HCT116 (cell line): ENCODE measurements at regions of chr2 and their contacts with region 1.

Region 1: DNA sequence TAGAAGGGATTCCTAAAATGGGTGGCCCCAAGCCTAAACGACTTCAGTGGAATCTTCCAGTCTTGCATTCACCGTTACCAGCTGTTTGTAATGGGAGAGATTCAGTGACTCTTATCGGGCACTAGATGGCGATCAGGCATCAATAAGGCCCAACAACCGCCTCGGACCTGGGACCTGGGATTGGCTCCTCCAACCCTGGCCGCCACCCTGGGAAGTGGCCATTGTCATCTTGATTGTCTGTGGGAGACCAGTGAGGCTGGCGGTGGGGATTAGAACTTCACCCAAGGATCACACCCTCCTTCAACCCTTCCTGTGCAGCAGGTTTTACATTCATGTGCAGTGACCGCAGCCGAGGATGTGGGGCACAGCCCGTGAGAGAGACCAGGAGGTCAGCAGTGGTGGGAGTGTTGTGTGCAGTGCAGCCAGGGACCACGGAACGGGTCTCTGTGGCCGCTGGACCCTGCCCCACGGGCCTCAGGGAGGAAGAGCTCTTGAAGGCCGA is 85.3 kb downstream of the SPP2 start:
- DNase-seq: peak; percentile 73
- ATAC-seq: peak; percentile 97
- H3K4me3 ChIP-seq: no peak overlapping the region
- H3K27ac ChIP-seq: peak overlapping the region; percentile 15; the same call in 1 of the 2 replicates
- H3K4me1 ChIP-seq: peaks cover 8 to 33% of the 10 kb centered on the region in 2 experiments; a peak in 3 of 4 replicates
- H3K27me3 ChIP-seq: no peaks in the 10 kb centered on the region
- CTCF ChIP-seq: peak; percentile 82 to 91 (median 89)
- POLR2A ChIP-seq: no peak
- RAD21 ChIP-seq: peak; percentile 99

Region 2: DNA sequence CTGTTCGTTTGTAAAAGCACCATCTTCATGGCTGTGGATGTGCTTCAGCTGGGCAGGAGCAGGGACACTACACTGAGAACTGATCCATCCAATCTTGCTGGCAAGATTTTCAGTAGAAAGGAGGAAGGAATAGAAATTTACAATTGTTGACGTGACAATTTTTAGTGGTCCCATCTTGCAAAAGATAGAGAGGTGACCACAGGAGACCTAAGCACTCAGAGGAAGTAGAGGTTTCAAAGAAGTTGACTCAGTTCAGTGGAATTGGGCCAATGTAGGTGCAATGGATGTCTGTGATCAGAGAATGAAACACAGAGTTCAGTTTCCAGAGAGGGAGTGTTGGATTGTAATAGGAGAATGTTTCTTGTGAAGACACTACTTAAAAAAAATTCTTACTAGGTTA is 421.6 kb before region 1 on chr2:
- CTCF ChIA-PET with region 1: no interaction called
- POLR2A ChIA-PET with region 1: no interaction called
- RAD21 ChIA-PET with region 1: no interaction called
- intact Hi-C with region 1: no loop called
- DNase-seq: no peak
- ATAC-seq: no peak
- H3K4me3 ChIP-seq: no peak overlapping the region
- H3K27ac ChIP-seq: no peak overlapping the region
- H3K4me1 ChIP-seq: no peaks in the 10 kb centered on the region
- H3K27me3 ChIP-seq: peaks cover 14% of the 10 kb centered on the region; the same call in 1 of the 2 replicates
- CTCF ChIP-seq: no peak
- POLR2A ChIP-seq: no peak
- RAD21 ChIP-seq: no peak

Region 3: DNA sequence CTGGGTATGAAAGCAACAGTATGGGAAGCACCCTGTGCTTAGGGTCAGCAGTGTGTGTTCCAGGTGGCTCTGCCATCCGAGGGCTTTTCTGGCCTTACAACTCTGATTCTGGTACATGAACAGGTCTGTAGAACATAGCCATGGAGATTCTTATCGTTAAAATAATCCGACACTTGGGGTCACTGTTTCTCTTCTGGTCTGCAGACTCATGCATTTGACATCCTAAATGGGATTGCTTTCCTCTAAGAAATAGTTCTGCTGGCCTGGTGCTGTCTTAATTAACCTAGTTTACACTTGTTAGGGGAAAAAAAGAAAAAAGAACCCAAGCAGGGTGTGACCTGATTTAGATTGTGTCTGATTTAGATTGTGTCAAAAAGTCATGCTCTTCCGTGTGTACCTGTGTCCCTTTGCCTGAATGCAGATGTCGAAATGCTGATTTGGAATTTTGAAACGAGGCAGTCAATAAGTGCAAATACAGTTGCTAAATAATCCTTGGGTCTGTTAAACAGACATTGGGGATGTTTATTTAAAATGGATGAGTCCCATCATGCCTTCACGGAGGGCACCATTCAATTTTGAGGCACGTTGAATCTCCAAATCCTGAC is 159.0 kb before region 1 on chr2:
- CTCF ChIA-PET with region 1: no interaction called
- POLR2A ChIA-PET with region 1: no interaction called
- RAD21 ChIA-PET with region 1: no interaction called
- intact Hi-C with region 1: loop called (anchors 1 kb)
- DNase-seq: peak; percentile 62
- ATAC-seq: peak; percentile 32; the same call in 1 of the 2 replicates
- H3K4me3 ChIP-seq: no peak overlapping the region
- H3K27ac ChIP-seq: no peak overlapping the region
- H3K4me1 ChIP-seq: peaks cover 31 to 64% of the 10 kb centered on the region in 2 experiments
- H3K27me3 ChIP-seq: no peaks in the 10 kb centered on the region
- CTCF ChIP-seq: peak; percentile 37 to 81 (median 65); a peak in 5 of 6 replicates
- POLR2A ChIP-seq: no peak
- RAD21 ChIP-seq: peak; percentile 97

Region 4: DNA sequence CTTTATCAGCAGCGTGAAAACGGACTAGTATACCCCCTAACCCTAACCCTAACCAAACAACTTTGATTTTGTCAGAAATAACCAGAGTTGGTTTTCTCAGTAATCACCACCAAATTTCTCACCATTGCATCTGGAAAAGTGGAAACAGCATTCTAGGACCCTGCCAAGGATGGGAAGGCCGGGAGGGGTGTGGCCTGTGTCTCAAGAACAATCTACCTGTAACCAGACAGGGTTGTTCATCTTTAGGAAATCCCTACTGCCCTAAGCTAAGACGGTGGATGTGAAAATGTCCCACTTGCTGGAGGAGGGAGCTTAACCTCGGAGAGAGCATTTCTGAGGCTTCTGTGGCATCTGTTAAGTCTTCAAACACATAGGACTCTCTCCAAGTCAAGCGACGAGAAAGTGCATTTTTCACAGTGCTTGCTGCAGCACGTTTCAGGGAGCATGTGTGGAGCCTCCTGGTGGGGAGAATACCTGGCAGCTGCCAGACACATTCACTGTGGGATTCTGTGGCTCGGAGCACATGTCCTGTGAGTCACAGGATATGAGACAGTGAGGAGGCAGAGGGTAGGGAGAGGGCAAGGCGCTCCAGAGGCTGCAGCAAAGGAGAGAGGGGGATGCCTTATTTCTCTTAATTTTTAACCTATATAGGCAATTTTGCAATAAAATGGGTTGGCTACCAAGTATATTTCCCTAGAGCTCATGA is 122.2 kb after region 1 on chr2:
- CTCF ChIA-PET with region 1: no interaction called
- POLR2A ChIA-PET with region 1: no interaction called
- RAD21 ChIA-PET with region 1: no interaction called
- intact Hi-C with region 1: loop called (anchors 1 kb)
- DNase-seq: peak; percentile 92
- ATAC-seq: peak; percentile 98
- H3K4me3 ChIP-seq: peak overlapping the region; percentile 3 to 25; a peak in 1 of 4 replicates
- H3K27ac ChIP-seq: peak overlapping the region; percentile 45
- H3K4me1 ChIP-seq: peaks cover 12 to 58% of the 10 kb centered on the region in 2 experiments
- H3K27me3 ChIP-seq: no peaks in the 10 kb centered on the region
- CTCF ChIP-seq: peak; percentile 59 to 77 (median 76); a peak in 5 of 6 replicates
- POLR2A ChIP-seq: no peak
- RAD21 ChIP-seq: peak; percentile 80

Region 5: GRCh38 chr2:234288974-234289455 is 153.2 kb after region 1 on chr2:
- CTCF ChIA-PET with region 1: interaction called, 3 read pairs
- POLR2A ChIA-PET with region 1: no interaction called
- RAD21 ChIA-PET with region 1: no interaction called
- intact Hi-C with region 1: loop called (anchors 1 kb)
- DNase-seq: peak; percentile 65
- ATAC-seq: peak; percentile 84
- H3K4me3 ChIP-seq: no peak overlapping the region
- H3K27ac ChIP-seq: no peak overlapping the region
- H3K4me1 ChIP-seq: peaks cover 19 to 55% of the 10 kb centered on the region in 2 experiments; a peak in 3 of 4 replicates
- H3K27me3 ChIP-seq: no peaks in the 10 kb centered on the region
- CTCF ChIP-seq: peak; percentile 67 to 89 (median 83); a peak in 5 of 6 replicates
- POLR2A ChIP-seq: no peak
- RAD21 ChIP-seq: peak; percentile 90

Region 6: DNA sequence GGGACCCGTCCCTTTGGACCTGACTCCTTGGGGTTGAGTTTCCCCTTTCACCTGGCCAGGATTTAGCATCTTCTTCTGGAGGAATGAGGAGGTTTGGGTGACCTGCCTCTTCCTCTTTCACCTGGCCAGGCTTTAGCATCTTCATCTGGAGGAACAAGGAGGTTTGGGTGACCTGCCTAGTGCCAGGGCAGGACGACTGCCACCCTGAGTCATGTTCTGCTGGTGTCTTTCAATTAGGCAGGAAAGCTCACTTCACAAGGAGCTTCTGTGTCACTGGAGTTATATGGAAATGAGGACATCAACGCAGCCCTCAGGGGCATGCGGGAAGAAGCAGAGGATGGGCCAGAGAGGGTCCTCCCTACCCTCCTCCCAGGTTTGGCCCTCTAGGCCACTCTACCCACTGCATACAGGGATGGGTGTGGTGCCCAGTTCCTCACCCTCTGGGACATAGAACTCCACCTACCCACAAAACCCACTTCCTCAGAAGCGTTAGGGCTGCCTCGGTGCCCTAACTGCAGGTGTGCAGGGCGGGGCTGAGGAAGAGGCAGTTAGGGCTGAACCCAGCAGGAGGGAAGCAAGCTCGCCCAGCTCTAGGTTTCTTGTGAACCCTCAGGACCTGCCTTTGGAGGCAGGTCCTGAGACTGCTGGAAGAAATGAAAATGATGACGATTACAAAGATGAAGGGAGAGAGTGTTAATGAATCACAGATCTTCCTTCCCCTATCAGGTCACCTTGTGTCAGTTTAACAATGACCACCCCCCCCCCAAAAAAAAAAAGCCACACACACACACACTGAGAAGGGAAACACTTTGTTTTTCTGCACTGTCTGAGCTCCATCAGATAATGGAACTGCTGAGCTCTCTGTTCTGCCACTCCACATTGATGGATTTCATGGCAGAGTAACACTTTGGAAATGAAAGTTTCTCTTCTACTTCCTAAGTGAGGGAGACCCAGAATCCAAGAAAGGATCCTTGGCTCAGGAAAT is 290.1 kb after region 1 on chr2:
- CTCF ChIA-PET with region 1: no interaction called
- POLR2A ChIA-PET with region 1: no interaction called
- RAD21 ChIA-PET with region 1: no interaction called
- intact Hi-C with region 1: loop called (anchors 10 kb)
- DNase-seq: no peak
- ATAC-seq: no peak
- H3K4me3 ChIP-seq: no peak overlapping the region
- H3K27ac ChIP-seq: no peak overlapping the region
- H3K4me1 ChIP-seq: peaks cover 22 to 60% of the 10 kb centered on the region in 2 experiments
- H3K27me3 ChIP-seq: no peaks in the 10 kb centered on the region
- CTCF ChIP-seq: no peak
- POLR2A ChIP-seq: no peak
- RAD21 ChIP-seq: no peak

Region 7: DNA sequence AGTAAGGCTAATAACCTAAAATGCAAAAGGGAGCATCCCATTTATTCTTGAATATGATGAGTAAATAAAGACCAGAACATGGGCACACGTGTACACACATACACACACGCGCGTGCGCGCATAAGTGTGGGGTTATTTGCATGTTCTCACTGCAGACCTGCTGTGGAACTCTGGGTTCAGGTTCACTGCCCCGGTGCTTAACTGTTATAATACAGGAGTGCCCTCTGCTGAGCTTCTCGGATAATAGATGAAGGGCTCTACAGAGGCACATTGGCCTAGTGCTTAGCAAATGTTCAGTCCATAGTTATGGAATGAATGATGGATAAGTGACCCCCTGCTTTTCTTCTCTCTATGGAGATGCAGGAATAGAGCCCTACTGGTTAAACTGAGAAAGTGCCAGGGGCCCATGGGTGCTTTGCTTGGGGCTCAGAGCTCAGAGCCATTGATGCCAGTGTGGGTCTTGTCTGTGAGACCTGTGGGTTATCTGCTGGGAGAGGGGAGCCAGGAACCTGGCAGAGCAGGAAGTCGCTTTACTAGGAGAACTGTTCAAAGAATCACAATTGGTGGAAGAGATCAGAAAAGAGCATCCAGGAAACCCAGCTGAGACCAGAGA is 364.7 kb after region 1 on chr2:
- CTCF ChIA-PET with region 1: interaction called, 11 read pairs
- POLR2A ChIA-PET with region 1: no interaction called
- RAD21 ChIA-PET with region 1: interaction called in 1 of 2 experiments, 3 read pairs
- intact Hi-C with region 1: loop called (anchors 1 kb)
- DNase-seq: peak; percentile 49
- ATAC-seq: peak; percentile 60
- H3K4me3 ChIP-seq: no peak overlapping the region
- H3K27ac ChIP-seq: no peak overlapping the region
- H3K4me1 ChIP-seq: peaks cover 24 to 29% of the 10 kb centered on the region in 2 experiments
- H3K27me3 ChIP-seq: no peaks in the 10 kb centered on the region
- CTCF ChIP-seq: peak; percentile 42 to 82 (median 69); a peak in 5 of 6 replicates
- POLR2A ChIP-seq: no peak
- RAD21 ChIP-seq: peak; percentile 94

Region 8: GRCh38 chr2:234544659-234545611 is 409.2 kb after region 1 on chr2:
- CTCF ChIA-PET with region 1: interaction called, 16 read pairs
- POLR2A ChIA-PET with region 1: no interaction called
- RAD21 ChIA-PET with region 1: interaction called in 1 of 2 experiments, 4 read pairs
- intact Hi-C with region 1: loop called (anchors 1 kb)
- DNase-seq: peak; percentile 38
- ATAC-seq: peak; percentile 96
- H3K4me3 ChIP-seq: no peak overlapping the region
- H3K27ac ChIP-seq: no peak overlapping the region
- H3K4me1 ChIP-seq: peaks cover 3 to 8% of the 10 kb centered on the region in 2 experiments; a peak in 2 of 4 replicates
- H3K27me3 ChIP-seq: no peaks in the 10 kb centered on the region
- CTCF ChIP-seq: peak; percentile 84 to 85 (median 85)
- POLR2A ChIP-seq: no peak
- RAD21 ChIP-seq: peak; percentile 90